OCI-LY7 (cell line): ENCODE measurements at regions of chr3 and their contacts with region 1.

Region 1: GRCh38 chr3:101381809-101382208 is 61.4 kb upstream of the IMPG2 start:
- DNase-seq: peak; percentile 21
- H3K4me3 ChIP-seq: no peak overlapping the region
- H3K27ac ChIP-seq: no peak overlapping the region
- H3K4me1 ChIP-seq: peaks cover 6% of the 10 kb centered on the region
- CTCF ChIP-seq: peak; percentile 69

Region 2: GRCh38 chr3:100913870-100914648 is 467.8 kb before region 1 on chr3:
- CTCF ChIA-PET with region 1: no interaction called
- POLR2A ChIA-PET with region 1: no interaction called
- intact Hi-C with region 1: no loop called
- DNase-seq: no peak
- H3K4me3 ChIP-seq: no peak overlapping the region
- H3K27ac ChIP-seq: no peak overlapping the region
- H3K4me1 ChIP-seq: no peaks in the 10 kb centered on the region
- CTCF ChIP-seq: no peak

Region 3: GRCh38 chr3:101069901-101070798 is 311.7 kb before region 1 on chr3:
- CTCF ChIA-PET with region 1: no interaction called
- POLR2A ChIA-PET with region 1: no interaction called
- intact Hi-C with region 1: loop called (anchors 10 kb)
- DNase-seq: peak; percentile 45
- H3K4me3 ChIP-seq: no peak overlapping the region
- H3K27ac ChIP-seq: no peak overlapping the region
- H3K4me1 ChIP-seq: no peaks in the 10 kb centered on the region
- CTCF ChIP-seq: peak; percentile 88

Region 4: DNA sequence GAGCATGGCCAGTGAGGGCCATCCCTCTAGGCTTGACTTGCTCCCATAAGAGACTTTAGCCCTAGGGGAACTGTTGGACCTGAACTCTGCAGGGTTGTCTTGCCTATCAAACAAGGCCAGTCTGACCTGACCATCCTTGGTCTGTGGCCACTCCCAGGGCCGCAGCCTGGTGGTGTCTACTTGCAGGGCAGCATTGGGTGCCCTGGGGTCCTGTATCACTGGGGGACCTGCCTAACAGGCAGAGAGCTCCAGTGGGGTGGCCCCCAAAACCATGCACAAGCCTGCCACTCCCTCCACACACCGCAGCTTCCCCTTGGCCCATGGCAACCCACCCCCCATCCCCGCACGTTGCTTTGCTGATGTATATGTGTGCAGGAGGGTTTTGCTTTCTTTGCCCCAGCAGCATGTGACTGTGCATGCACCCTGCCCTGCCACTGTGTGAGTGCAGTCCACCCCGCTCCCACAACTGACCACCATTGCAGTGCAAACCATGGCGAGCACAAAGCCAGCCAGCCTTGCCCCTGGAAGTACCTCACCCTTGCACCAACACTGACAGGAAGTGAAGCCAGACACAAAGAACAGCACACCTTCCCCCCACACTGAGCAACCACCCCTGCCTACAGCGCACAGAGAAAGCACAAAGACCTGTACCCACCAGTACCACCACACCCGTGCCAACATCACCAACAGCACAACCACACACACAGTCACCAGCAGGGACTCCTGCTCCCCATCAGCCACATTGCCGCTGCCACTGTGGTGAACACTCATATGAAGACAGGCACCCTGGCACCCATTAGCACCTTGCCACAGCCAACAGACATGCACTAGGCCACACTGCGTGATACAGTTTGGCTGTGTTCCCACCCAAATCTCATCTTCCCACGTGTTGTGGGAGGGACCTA is 42.4 kb after region 1 on chr3:
- CTCF ChIA-PET with region 1: no interaction called
- POLR2A ChIA-PET with region 1: no interaction called
- intact Hi-C with region 1: no loop called
- DNase-seq: no peak
- H3K4me3 ChIP-seq: no peak overlapping the region
- H3K27ac ChIP-seq: no peak overlapping the region
- H3K4me1 ChIP-seq: no peaks in the 10 kb centered on the region
- CTCF ChIP-seq: no peak

Region 5: GRCh38 chr3:101561630-101562328 is 180.0 kb after region 1 on chr3 and contains the start of gene TRMT10C:
- CTCF ChIA-PET with region 1: no interaction called
- POLR2A ChIA-PET with region 1: no interaction called
- intact Hi-C with region 1: loop called (anchors 5 kb)
- DNase-seq: peak; percentile 95
- H3K4me3 ChIP-seq: peak within 1 kb of the TSS; percentile 97
- H3K27ac ChIP-seq: peak within 1 kb of the TSS; percentile 56
- H3K4me1 ChIP-seq: peaks cover 24% of the 10 kb centered on the region
- CTCF ChIP-seq: no peak
- total RNA-seq, gene TRMT10C: 23.6 and 26.5 TPM in 2 replicates

Region 6: DNA sequence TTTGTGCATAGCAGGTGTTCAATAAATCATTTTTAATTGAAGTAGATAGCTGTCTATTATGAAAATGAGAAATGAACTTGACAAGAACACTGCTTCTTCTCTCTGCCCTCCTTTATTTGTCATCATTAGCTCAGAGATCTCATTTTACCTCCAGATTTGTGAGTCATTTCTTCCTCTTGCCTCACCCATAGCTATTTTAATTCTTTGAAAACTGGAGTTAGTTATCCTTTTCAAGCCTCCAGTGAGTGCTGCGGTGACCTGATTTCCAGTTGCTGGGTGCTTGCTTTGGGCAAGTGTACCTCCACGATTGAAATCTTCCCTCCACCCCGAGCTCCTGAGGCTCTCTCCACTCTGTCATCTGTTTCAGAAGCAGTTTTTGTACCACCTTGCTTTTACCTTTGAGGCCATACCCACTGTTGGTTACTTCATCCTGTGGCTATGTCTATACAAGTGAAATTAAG is 582.1 kb after region 1 on chr3:
- CTCF ChIA-PET with region 1: no interaction called
- POLR2A ChIA-PET with region 1: no interaction called
- intact Hi-C with region 1: no loop called
- DNase-seq: no peak
- H3K4me3 ChIP-seq: no peak overlapping the region
- H3K27ac ChIP-seq: no peak overlapping the region
- H3K4me1 ChIP-seq: no peaks in the 10 kb centered on the region
- CTCF ChIP-seq: no peak

Region 7: DNA sequence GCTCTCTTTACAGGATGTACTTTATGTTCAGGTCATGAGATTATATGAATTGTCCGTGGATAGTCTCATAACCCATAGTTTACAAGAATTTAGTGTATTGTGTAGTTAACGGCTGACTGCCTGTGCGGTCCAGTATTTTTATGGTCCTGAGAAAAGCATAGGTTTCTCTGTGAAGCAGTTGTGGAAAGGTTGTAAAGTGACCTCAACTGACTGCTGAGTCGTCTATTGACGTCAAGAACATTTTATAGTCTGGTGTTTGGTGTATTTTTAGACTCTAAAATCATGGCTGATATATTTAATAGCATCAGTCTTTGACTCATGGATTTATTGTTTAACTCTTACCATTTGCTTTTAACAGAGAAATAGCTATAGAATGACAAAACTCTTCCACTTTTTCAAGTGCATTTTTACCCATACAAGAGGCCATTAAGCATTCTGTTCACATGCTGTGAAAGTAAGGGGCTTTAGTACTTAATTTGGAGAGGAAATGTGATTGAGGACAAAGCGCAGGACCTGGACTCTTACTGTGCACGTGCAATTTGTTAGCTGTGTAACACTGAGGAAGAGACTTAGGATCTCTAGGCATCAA is 708.2 kb after region 1 on chr3:
- CTCF ChIA-PET with region 1: no interaction called
- POLR2A ChIA-PET with region 1: no interaction called
- intact Hi-C with region 1: no loop called
- DNase-seq: no peak
- H3K4me3 ChIP-seq: no peak overlapping the region
- H3K27ac ChIP-seq: no peak overlapping the region
- H3K4me1 ChIP-seq: no peaks in the 10 kb centered on the region
- CTCF ChIP-seq: no peak